Activated B cell treated with CpG ODN at 0.5 μM for 24 hours (primary cell): ENCODE measurements at regions of chr2 and their contacts with region 1.

Region 1: DNA sequence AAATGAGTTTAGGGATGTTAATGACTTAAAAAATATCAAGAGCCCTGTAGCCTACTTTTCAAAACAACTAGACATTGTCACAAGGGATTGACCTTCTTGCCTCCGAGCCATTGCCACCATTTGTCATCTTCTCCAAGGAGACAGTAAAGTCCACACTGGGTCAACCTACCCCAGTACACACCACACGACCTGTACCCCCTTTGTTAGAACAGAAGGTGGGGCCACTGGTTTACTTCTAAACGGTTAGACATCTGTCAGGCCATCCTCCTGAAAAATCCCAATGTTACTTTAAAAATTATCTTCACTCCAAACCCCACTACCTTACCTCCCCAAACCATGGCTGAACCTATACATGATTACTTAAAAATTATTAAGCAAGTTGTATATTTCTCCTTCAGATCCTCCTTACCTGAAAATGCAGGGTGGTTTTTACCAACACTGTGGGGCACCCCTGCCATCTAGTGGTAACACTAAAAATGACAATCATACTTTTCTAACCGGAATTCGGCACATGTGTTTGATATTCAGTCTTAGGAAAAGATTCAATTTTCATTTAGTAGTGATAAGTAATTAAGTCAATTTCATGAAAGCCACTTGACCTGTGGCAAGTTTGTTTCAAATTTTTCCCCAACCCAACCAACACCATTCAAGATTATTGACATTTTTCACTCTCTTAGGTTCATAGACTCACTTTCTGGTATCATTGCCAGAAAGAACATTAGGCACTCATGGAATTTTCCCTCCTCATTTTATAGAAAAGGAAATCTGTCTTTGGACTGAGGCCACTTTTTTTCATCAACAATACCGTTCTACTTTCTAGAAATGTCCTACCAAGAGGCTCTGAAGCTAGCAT is 265.3 kb upstream of the PKDCC start:
- DNase-seq: no peak
- ATAC-seq: no peak
- H3K4me3 Mint-ChIP-seq: no peak overlapping the region
- H3K27ac Mint-ChIP-seq: no peak overlapping the region
- H3K4me1 Mint-ChIP-seq: no peaks in the 10 kb centered on the region
- H3K27me3 Mint-ChIP-seq: peaks cover 12% of the 10 kb centered on the region
- CTCF ChIP-seq: peak; percentile 87

Region 2: GRCh38 chr2:39913648-39914461 is 1868.7 kb before region 1 on chr2:
- CTCF ChIA-PET with region 1: interaction called, 10 read pairs
- POLR2A ChIA-PET with region 1: no interaction called
- intact Hi-C with region 1: loop called (anchors 1 kb)
- DNase-seq: no peak
- ATAC-seq: peak; percentile 34
- H3K4me3 Mint-ChIP-seq: no peak overlapping the region
- H3K27ac Mint-ChIP-seq: no peak overlapping the region
- H3K4me1 Mint-ChIP-seq: no peaks in the 10 kb centered on the region
- H3K27me3 Mint-ChIP-seq: peaks cover 2% of the 10 kb centered on the region
- CTCF ChIP-seq: no peak

Region 3: DNA sequence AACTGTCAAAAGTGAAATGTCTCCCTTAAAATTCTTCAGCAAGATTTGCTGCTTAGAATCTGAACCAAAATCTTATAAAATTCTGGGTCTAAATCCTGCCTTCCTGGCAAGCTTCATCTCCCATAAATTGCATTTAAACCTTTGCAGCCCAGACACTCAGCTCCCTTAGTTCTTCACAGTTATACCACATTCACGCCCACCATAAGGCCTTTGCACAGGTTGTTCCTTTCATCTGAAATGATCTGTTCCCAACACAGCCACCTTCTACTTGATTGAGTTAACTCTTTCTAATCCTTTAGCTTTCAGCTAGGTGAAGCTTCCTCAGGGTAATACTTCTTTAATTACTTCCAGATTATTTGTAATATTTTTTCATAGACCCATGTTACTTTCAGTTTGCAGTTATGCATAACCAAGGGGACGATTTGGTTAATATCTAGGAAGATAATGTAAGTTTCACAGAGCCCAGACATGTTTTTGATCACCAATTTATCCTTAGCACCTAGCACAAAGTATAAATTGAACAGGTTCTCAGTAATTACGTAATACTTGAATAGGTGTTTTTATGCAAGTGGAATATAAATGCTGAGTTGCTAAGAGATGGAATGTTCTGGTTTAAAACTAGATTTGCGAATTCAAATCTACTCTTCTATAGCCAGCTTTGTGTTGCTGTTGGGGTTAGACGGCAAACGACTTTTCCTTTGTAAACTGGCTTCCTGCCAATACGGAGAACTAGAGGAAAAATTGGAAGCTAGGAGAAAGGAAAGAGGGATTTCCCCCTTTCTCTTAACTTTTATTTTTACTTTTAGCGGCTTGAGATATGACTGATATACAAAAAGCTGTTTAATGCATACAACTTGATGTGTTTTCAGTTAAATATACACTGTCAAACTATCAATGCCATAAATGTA is 514.3 kb before region 1 on chr2:
- CTCF ChIA-PET with region 1: no interaction called
- POLR2A ChIA-PET with region 1: no interaction called
- intact Hi-C with region 1: no loop called
- DNase-seq: no peak
- ATAC-seq: no peak
- H3K4me3 Mint-ChIP-seq: no peak overlapping the region
- H3K27ac Mint-ChIP-seq: no peak overlapping the region
- H3K4me1 Mint-ChIP-seq: no peaks in the 10 kb centered on the region
- H3K27me3 Mint-ChIP-seq: no peaks in the 10 kb centered on the region
- CTCF ChIP-seq: no peak